Psoas muscle (tissue), 8 donors: ENCODE measurements at regions of chr6 and their contacts with region 1.

Region 1: DNA sequence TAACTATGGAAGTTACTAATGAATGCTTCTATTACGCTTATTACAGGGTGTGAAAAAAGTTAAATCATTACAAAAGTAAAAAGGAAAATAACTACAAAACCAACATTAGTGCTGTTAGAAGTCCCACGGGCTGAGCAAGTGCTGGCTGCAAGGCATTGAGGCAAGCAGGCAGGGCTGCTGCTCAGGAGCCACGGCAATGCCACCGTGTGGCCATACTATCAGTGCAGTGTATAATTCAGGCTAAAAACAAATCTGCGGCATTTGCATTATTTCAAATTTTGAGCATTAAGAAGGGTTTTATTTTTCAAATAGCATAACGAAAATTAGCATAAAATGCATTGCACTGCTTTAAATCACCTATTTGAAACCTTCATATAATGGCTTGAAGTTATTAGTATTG is 17.1 kb downstream of the IFNGR1 start:
- DNase-seq: no peak
- ATAC-seq: no peak
- H3K4me3 ChIP-seq: no peak overlapping the region
- H3K27ac ChIP-seq: no peak overlapping the region
- H3K4me1 ChIP-seq: no peaks in the 10 kb centered on the region
- H3K27me3 ChIP-seq: no peaks in the 10 kb centered on the region
- CTCF ChIP-seq: peak; percentile 13

Region 2: DNA sequence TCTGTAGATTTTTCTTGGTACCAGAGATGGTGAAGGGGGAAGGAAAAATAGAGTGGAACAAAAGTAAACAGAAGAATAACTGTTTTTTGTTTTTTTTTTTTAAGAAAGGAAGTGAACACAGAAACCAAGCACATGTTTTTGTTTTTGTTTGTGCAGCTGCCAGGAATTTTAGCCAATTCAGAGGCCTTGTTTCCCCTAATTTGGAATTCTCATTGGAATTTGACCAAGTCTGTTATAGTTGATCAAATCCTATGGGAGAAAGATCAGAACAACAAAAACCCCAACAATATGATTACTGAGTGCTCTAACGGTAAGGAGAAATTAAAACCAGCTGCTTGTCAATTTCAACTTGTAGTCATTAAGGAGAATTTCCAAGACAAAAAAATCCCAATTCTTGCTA is 10.4 kb before region 1 on chr6:
- intact Hi-C with region 1: loop called in 1 of 2 experiments (anchors 1 kb)
- DNase-seq: no peak
- ATAC-seq: no peak
- H3K4me3 ChIP-seq: no peak overlapping the region
- H3K27ac ChIP-seq: no peak overlapping the region
- H3K4me1 ChIP-seq: no peaks in the 10 kb centered on the region
- H3K27me3 ChIP-seq: no peaks in the 10 kb centered on the region
- CTCF ChIP-seq: no peak